ENCODE measurements at regions of chr1 and their contacts with region 1.

Region 1: DNA sequence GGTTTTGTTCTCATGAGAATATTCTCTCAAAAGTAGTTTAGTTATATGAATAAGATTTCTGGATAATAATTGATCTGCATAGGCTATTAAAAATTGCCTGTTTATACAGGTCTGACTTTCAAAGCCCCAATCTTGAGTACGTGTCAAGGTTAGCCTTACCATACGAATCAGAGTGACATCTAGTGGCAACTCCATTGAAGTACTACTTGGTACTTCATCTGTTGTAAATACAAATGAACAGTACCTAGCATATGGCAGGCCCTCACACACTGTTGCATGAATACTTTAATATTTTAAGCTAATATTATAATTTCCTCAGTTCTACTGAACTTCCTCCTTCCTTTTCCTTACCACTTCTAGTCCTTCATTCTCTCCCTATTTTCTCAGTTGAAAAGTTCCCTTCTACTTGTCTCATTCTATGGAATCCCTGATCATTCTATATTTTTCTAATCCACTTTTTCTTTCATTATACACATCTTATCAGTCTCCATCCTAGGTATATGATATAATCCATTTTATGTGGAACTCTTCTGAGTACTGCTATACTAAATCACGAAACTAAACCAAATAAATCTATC is 101.2 kb downstream of the AKT3 start:
- DNase-seq: no peak
- H3K4me3 ChIP-seq: no peak overlapping the region
- H3K27ac ChIP-seq: no peak overlapping the region
- H3K4me1 ChIP-seq: peaks cover 0 to 14% of the 10 kb centered on the region in 2 donors
- H3K27me3 ChIP-seq: no peaks in the 10 kb centered on the region
- CTCF ChIP-seq: peak; percentile 48 to 81 (median 80)

Region 2: DNA sequence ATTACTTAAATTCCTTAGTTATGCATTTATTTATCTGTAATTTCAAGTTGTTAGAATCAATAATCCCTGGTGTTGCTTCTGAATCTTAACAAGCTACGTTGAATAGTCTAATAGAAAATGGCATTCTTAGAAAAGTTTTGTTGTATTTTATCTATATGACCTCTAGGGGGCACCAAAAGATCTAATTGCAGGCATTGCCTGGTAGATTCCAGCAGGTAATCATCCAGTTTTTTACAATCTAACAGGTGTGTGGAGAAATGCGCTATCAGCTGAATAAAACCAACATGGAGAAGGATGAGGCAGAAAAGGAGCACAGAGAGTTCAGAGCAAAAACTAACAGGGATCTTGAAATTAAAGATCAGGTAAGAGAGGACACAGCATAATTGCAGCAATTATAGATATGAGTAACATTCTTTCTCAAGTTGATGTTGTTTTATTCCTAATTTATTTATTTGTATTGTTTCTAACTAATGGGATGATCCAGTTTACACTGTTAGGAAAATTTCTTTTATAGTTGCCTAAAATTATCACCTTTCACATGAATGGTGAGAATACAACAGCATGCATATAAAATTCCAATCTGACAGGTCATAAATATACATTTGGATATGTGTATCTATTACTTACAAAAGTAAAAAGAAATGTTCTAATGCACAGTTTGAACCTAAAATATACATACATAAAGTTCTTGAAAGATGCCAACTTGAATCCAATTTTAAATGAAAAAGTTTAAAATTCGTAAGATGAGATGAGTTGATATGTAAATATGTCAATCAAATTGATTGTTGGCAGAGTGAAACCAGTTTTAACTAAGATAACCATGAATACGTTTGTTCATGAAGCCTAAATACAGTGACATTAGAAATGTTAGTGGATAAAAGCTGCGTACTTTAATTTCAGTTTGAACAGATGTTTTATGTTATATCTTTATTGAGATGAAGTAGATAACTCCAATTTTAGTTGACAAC is 404.5 kb before region 1 on chr1:
- intact Hi-C with region 1: loop called (anchors 10 kb)
- DNase-seq: no peak
- H3K4me3 ChIP-seq: no peak overlapping the region
- H3K27ac ChIP-seq: no peak overlapping the region
- H3K4me1 ChIP-seq: no peaks in the 10 kb centered on the region
- H3K27me3 ChIP-seq: no peaks in the 10 kb centered on the region
- CTCF ChIP-seq: peak; percentile 51 to 75 (median 69)

Region 3: GRCh38 chr1:243708210-243708609 is 40.6 kb before region 1 on chr1:
- intact Hi-C with region 1: no loop called
- DNase-seq: no peak
- H3K4me3 ChIP-seq: no peak overlapping the region
- H3K27ac ChIP-seq: no peak overlapping the region
- H3K4me1 ChIP-seq: peaks cover 4 to 8% of the 10 kb centered on the region in 2 donors
- H3K27me3 ChIP-seq: no peaks in the 10 kb centered on the region
- CTCF ChIP-seq: peak in 2 of 3 experiments; percentile 9 to 30